Activated CD4-positive, alpha-beta memory T cell treated with anti-CD3 and anti-CD28 coated beads for 36 hours (primary cell): ENCODE measurements at regions of chr17 and their contacts with region 1.

Region 1: DNA sequence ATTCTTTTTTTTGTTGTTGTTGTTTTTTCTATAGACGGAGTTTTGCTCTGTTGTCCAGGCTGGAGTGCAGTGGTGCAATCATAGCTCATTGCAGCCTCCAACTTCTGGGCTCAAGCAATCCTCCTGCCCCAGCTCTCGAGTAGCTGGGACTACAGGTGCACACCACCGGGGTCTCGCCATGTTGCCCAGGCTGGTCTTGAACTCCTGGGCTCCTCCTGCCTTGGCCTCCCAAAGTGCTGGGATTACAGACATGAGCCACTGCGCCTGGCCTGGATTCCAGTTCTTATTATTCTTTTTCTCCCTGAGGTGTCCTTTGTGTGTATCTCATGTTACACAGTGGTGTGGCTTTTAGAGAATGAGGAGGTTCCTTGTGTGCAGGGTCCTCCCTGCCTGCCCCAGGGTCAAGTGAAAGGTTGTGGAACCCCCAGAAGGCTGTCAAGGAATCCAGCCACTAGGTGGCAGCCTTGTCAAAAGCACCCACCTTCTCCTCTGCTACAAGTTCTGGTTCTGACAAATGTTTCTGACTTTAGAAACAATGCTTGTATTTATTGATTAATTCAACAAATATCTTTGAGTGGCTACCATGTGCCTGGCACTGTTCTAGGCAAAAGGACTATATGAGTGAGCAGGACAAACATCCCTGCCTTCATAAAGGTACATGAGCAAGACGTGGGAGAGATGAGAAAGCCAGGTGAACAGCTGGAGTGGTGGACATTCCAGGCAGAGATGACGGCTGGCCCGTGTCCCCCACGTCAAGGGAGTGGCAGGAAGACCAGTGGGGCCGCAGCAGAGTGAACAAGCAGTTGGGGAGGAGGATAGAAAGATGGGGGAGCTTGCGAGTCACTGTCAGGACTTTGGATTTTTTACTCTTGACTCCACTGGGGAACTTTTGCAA is 112.4 kb downstream of the SPECC1 start:
- DNase-seq: peak; percentile 74
- H3K4me3 Mint-ChIP-seq: no peak overlapping the region
- H3K27ac Mint-ChIP-seq: no peak overlapping the region
- H3K4me1 Mint-ChIP-seq: no peaks in the 10 kb centered on the region
- H3K27me3 Mint-ChIP-seq: no peaks in the 10 kb centered on the region

Region 2: DNA sequence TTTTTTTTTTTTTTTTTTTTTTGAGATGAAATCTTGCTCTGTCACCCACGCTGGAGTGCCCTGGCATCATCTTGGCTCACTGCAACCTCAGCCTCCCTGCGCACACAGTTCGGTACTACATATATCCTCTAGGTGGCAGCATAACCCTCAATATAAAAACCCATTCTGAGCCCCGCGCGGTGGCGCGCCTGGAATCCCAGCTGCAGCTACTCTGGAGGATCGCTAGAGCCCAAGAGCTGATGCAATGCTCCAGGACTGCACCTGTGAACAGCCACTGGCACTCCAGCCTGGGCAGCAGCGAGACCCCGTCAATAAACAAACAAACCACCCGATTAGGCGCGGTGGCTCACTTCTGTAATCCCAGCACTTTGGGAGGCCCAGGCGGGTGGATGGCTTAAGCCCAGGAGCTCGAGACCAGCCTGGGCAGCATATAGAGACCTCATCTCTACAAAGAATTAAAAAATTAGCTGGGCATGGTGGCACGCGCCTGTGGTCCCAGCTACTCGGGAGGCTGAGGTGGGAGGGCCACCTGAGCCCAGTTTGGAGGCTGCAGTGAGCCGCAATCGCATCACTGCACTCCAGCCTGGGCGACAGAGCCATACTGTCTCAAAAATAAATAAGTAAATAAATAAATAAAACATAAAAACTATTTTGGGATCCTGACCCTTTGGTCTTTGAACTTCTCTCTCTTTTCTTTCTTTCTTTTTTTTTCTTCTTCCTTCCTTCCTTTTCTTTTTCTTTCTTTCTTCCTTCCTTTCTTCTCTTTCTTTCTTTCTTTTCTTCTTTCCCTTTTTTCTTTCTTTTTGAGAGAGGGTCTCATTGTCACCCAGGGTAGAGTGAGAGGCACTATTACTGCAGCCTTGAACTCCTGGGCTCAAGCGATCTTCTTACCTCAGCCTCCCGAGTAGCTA is 128.5 kb before region 1 on chr17:
- CTCF ChIA-PET with region 1: interaction called, 67 read pairs
- POLR2A ChIA-PET with region 1: no interaction called
- intact Hi-C with region 1: loop called (anchors 1 kb)
- DNase-seq: peak; percentile 85
- H3K4me3 Mint-ChIP-seq: peak overlapping the region; percentile 16
- H3K27ac Mint-ChIP-seq: no peak overlapping the region
- H3K4me1 Mint-ChIP-seq: peaks cover 9% of the 10 kb centered on the region
- H3K27me3 Mint-ChIP-seq: peaks cover 5% of the 10 kb centered on the region

Region 3: GRCh38 chr17:20032636-20033035 is 89.0 kb before region 1 on chr17:
- CTCF ChIA-PET with region 1: no interaction called
- POLR2A ChIA-PET with region 1: no interaction called
- intact Hi-C with region 1: no loop called
- DNase-seq: no peak
- H3K4me3 Mint-ChIP-seq: no peak overlapping the region
- H3K27ac Mint-ChIP-seq: no peak overlapping the region
- H3K4me1 Mint-ChIP-seq: peaks cover 6% of the 10 kb centered on the region
- H3K27me3 Mint-ChIP-seq: no peaks in the 10 kb centered on the region